ENCODE measurements at regions of chr22 and their contacts with region 1.

Region 1: GRCh38 chr22:31561238-31561887 is 65.0 kb downstream of the SFI1 start:
- DNase-seq: peak; percentile 47
- H3K4me3 ChIP-seq: no peak overlapping the region
- H3K27ac ChIP-seq: no peak overlapping the region
- H3K27me3 ChIP-seq: no peaks in the 10 kb centered on the region
- CTCF ChIP-seq: peak; percentile 94

Region 2: GRCh38 chr22:31075961-31076360 is 485.4 kb before region 1 on chr22:
- CTCF ChIA-PET with region 1: no interaction called
- POLR2A ChIA-PET with region 1: no interaction called
- DNase-seq: no peak
- H3K4me3 ChIP-seq: no peak overlapping the region
- H3K27ac ChIP-seq: no peak overlapping the region
- H3K27me3 ChIP-seq: no peaks in the 10 kb centered on the region
- CTCF ChIP-seq: no peak

Region 3: GRCh38 chr22:31530823-31531195 is 30.6 kb before region 1 on chr22:
- CTCF ChIA-PET with region 1: interaction called, 10 read pairs
- POLR2A ChIA-PET with region 1: no interaction called
- DNase-seq: no peak
- H3K4me3 ChIP-seq: no peak overlapping the region
- H3K27ac ChIP-seq: no peak overlapping the region
- H3K27me3 ChIP-seq: no peaks in the 10 kb centered on the region
- CTCF ChIP-seq: no peak

Region 4: DNA sequence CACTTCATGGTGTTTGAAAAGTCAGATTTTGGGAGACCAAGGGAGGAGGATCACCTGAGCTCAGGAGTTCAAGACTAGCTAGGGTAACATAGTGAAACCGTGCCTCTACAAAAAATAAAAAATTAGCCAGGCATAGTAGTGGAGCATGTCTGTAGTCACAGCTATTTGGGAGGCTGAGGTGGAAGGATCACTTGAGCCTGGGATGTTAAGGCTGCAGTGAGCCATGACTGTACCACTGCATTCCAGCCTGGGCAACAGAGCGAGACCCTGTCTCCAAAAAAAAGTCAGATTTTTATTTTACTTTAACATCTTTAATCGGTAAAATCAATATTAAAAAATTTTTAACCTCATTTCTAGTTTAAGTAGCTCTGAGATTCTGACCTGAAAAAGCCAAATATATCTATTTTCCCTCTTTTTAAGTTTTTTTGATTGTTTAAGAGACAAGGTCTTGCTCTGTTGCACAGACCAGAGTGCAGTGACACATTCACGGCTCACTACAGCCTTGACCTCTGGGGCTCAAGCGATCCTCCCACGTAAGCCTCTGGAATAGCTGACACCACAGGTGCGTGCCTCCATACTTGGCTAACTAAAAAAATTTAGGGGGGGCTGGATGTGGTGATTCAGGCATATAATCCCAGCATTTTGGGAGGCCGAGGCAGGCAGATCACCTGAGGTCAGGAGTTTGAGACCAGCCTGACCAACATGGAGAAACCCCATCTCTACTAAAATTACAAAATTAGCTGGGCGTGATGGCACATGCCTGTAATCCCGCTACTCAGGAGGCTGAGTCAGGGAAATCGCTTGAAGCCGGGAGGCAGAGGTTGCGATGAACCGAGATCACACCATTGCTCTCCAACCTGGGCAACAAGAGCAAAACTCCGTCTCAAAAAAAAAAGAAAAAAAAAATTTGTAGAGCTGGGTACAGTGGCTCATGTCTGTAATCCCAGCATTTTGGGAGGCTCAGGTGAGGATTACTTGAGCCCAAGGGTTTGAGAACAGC is 16.6 kb before region 1 on chr22:
- CTCF ChIA-PET with region 1: interaction called, 23 read pairs
- POLR2A ChIA-PET with region 1: no interaction called
- DNase-seq: no peak
- H3K4me3 ChIP-seq: no peak overlapping the region
- H3K27ac ChIP-seq: no peak overlapping the region
- H3K27me3 ChIP-seq: no peaks in the 10 kb centered on the region
- CTCF ChIP-seq: no peak

Region 5: DNA sequence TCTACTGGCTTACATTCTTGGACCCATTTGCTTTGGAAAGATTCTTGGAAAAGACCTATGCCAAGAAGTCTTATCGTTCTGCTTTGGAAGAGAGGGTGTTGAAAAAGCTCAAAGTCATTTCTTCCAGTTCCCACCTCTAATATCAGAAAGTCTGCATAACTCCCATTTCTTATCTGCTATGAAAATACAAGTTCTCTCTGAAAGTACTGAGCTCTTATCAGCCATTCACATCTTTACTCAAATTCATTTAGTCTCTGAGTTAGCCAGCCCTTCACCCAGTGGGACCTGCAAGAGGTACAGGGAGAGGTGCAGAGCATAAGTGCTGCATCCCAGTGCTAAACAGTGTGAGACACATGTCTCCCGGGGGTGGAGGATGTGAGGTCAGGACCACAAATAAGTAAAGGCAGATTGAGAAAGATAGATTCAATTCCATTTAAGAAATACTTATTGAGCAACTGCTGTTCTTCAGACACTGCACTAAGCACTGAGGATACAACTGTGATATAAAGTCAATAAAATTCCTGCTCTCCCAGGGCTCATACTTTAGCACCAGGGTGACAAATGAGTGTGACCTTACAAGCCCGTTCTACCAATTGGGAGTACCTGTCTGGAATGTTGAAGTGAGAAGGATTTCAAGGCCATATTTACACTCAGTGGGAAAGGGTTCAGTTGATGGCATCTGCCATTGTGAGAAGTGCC is 23.9 kb after region 1 on chr22:
- CTCF ChIA-PET with region 1: interaction called, 17 read pairs
- POLR2A ChIA-PET with region 1: no interaction called
- DNase-seq: no peak
- H3K4me3 ChIP-seq: no peak overlapping the region
- H3K27ac ChIP-seq: no peak overlapping the region
- H3K27me3 ChIP-seq: no peaks in the 10 kb centered on the region
- CTCF ChIP-seq: no peak

Region 6: GRCh38 chr22:31637938-31638618 is 76.7 kb after region 1 on chr22:
- CTCF ChIA-PET with region 1: interaction called, 167 read pairs
- POLR2A ChIA-PET with region 1: interaction called, 6 read pairs
- DNase-seq: no peak
- H3K4me3 ChIP-seq: no peak overlapping the region
- H3K27ac ChIP-seq: peak overlapping the region; percentile 47
- H3K27me3 ChIP-seq: no peaks in the 10 kb centered on the region
- CTCF ChIP-seq: no peak

Measured in AG04450 (cell line).